CD4-positive, alpha-beta memory T cell (primary cell): ENCODE measurements at regions of chr6 and their contacts with region 1.

Region 1: GRCh38 chr6:118810420-118811027 is 83.4 kb upstream of the ASF1A start:
- DNase-seq: peak; percentile 74 to 89 (median 84)
- H3K4me3 ChIP-seq: peak overlapping the region in 1 of 2 donors; percentile 12
- H3K4me3 Mint-ChIP-seq: peak overlapping the region; percentile 62 to 91 (median 82)
- H3K27ac ChIP-seq: peak overlapping the region; percentile 49
- H3K27ac Mint-ChIP-seq: peak overlapping the region; percentile 87 to 99 (median 96)
- H3K4me1 ChIP-seq: peaks cover 47% of the 10 kb centered on the region
- H3K4me1 Mint-ChIP-seq: peaks cover 46 to 77% (median 51%) of the 10 kb centered on the region in 4 donors
- H3K27me3 ChIP-seq: no peaks in the 10 kb centered on the region
- H3K27me3 Mint-ChIP-seq: no peaks in the 10 kb centered on the region

Region 2: DNA sequence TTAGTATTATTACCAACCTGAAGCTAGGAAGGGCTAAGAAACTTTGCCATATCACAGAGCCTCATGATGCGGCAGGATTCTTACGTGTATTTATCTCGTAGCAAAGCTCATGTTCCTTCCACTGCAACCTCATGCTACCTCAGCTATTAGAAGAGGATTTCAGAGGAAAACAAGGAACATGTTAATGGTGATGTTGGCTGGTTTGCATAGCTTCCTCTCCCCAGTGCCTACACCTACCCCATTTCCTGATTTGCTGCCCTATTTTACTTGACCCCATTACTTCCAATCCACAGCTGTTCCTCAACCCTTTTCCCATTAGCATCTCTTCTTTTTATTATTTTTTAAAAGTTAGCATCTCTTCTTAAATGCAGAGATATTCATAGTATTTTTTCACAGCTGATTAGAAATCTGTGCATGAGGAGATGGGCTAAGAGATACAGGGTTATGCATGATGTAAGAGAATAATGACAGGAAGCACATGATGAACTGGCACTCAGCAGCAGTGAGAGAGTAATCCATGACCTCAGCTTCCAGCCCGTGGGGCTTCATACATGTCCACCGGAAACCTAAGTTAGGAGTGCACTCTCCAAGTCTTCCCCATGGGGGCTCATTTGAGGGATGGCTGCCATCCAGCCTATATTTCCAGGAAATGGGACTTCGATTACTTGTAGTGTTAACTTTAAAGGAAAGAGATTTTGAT is 22.6 kb before region 1 on chr6:
- CTCF ChIA-PET with region 1: interaction called, 16 read pairs
- POLR2A ChIA-PET with region 1: interaction called, 17 read pairs
- intact Hi-C with region 1: no loop called
- DNase-seq: peak; percentile 38 to 58 (median 54)
- H3K4me3 ChIP-seq: no peak overlapping the region
- H3K4me3 Mint-ChIP-seq: peak overlapping the region in 7 of 8 donors; percentile 8 to 74 (median 59)
- H3K27ac ChIP-seq: peak overlapping the region; percentile 18
- H3K27ac Mint-ChIP-seq: peak overlapping the region; percentile 77 to 97 (median 95)
- H3K4me1 ChIP-seq: peaks cover 29% of the 10 kb centered on the region
- H3K4me1 Mint-ChIP-seq: peaks cover 27 to 40% (median 34%) of the 10 kb centered on the region in 4 donors
- H3K27me3 ChIP-seq: no peaks in the 10 kb centered on the region
- H3K27me3 Mint-ChIP-seq: no peaks in the 10 kb centered on the region

Region 3: DNA sequence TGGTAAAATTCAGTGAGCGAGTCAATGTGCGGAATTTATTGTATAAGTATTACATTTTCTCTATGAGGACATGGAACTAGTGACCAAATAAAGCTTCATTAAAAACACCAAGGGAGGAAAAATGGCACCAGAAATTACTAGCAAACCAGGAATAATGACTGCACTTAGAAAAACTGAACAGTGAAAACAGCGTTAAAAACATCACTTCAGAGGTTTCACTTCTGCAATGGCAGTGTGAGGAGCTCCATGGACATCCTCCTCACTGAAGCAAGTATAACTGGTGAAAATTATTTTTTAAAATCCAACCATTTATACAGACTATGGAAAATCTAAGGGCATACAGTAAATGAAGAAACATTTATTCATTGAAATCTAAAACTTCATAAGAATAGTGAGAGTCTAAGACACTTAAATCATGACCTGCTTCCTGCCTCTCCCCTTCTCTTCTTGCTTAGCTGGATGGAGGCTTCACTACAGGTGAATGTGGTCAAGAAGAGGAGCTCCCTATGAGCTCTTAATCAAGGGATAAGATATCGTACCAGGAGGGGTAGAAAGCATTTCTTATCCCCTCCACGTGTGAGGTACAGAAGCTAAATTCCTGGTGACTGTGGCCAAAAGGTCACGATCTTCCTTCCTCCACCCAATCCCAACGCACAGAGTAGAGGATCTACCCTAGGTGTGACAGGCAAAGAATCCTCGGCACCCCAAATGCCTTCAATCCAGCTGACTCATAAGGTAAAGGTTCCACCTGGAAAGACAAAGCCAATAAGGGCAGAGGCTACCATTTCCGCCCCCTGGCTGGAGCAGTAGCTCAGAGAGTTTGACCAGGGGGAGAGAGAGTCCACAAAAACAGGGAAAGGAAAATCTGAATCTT is 71.2 kb after region 1 on chr6:
- CTCF ChIA-PET with region 1: interaction called, 5 read pairs
- POLR2A ChIA-PET with region 1: interaction called, 14 read pairs
- intact Hi-C with region 1: no loop called
- DNase-seq: no peak
- H3K4me3 ChIP-seq: no peak overlapping the region
- H3K4me3 Mint-ChIP-seq: peak overlapping the region; percentile 13 to 77 (median 67)
- H3K27ac ChIP-seq: no peak overlapping the region
- H3K27ac Mint-ChIP-seq: peak overlapping the region in 4 of 7 donors; percentile 28 to 80 (median 56)
- H3K4me1 ChIP-seq: peaks cover 67% of the 10 kb centered on the region
- H3K4me1 Mint-ChIP-seq: peaks cover 54 to 87% (median 70%) of the 10 kb centered on the region in 4 donors
- H3K27me3 ChIP-seq: no peaks in the 10 kb centered on the region
- H3K27me3 Mint-ChIP-seq: no peaks in the 10 kb centered on the region

Region 4: DNA sequence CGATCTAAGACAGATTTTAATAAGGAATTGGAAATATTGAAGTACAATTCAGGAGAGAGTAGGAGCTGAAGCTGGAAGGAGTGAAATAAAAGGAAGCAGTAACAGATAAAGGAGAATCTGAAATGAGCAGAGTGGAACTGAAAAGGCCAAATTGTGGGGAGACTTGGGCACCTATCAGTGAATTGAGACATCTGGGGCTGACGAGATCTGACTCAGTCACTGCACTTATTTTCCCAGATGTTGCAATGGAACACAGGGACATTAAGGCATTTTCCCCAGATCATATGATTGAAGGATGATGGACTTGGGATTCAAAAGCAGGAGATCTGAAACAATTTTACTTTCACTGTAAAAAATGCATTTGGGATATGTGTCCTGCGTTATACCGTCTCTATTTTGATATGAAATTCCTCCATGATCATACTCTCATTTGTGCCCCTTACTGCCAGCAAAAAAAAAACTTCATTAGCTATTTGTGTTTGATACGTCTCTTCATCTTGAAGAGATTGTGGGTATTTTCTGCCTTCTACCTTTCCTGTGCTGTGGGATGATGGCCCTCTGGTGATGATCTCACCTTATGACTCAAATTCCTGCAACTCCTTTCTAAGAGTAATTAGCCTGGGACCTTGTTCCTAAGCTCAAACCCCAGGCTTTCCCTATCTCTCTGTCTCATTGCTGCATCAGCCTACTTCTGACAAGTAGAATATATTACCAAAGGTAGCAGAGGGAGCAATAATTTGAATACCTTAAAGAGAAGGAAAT is 817.6 kb after region 1 on chr6:
- CTCF ChIA-PET with region 1: no interaction called
- POLR2A ChIA-PET with region 1: no interaction called
- intact Hi-C with region 1: no loop called
- DNase-seq: no peak
- H3K4me3 ChIP-seq: no peak overlapping the region
- H3K4me3 Mint-ChIP-seq: no peak overlapping the region
- H3K27ac ChIP-seq: no peak overlapping the region
- H3K27ac Mint-ChIP-seq: no peak overlapping the region
- H3K4me1 ChIP-seq: no peaks in the 10 kb centered on the region
- H3K4me1 Mint-ChIP-seq: no peaks in the 10 kb centered on the region
- H3K27me3 ChIP-seq: no peaks in the 10 kb centered on the region
- H3K27me3 Mint-ChIP-seq: peaks cover 0 to 1% of the 10 kb centered on the region in 2 donors